ENCODE measurements at regions of chr6 and their contacts with region 1.

Region 1: GRCh38 chr6:125974214-125974866 is 12.0 kb upstream of the TRMT11 start:
- DNase-seq: peak; percentile 46
- ATAC-seq: peak; percentile 77
- H3K4me3 ChIP-seq: no peak overlapping the region
- H3K27ac ChIP-seq: no peak overlapping the region
- H3K4me1 ChIP-seq: no peaks in the 10 kb centered on the region
- H3K27me3 ChIP-seq: no peaks in the 10 kb centered on the region
- CTCF ChIP-seq: peak; percentile 35 to 67 (median 52); a peak in 5 of 6 replicates
- POLR2A ChIP-seq: no peak
- RAD21 ChIP-seq: peak; percentile 71

Region 2: GRCh38 chr6:125294925-125295324 is 679.4 kb before region 1 on chr6:
- CTCF ChIA-PET with region 1: no interaction called
- POLR2A ChIA-PET with region 1: no interaction called
- RAD21 ChIA-PET with region 1: no interaction called
- intact Hi-C with region 1: no loop called
- DNase-seq: no peak
- ATAC-seq: no peak
- H3K4me3 ChIP-seq: no peak overlapping the region
- H3K27ac ChIP-seq: no peak overlapping the region
- H3K4me1 ChIP-seq: peaks cover 0 to under 1% of the 10 kb centered on the region in 2 experiments; a peak in 1 of 4 replicates
- H3K27me3 ChIP-seq: no peaks in the 10 kb centered on the region
- CTCF ChIP-seq: no peak
- POLR2A ChIP-seq: no peak
- RAD21 ChIP-seq: no peak

Region 3: DNA sequence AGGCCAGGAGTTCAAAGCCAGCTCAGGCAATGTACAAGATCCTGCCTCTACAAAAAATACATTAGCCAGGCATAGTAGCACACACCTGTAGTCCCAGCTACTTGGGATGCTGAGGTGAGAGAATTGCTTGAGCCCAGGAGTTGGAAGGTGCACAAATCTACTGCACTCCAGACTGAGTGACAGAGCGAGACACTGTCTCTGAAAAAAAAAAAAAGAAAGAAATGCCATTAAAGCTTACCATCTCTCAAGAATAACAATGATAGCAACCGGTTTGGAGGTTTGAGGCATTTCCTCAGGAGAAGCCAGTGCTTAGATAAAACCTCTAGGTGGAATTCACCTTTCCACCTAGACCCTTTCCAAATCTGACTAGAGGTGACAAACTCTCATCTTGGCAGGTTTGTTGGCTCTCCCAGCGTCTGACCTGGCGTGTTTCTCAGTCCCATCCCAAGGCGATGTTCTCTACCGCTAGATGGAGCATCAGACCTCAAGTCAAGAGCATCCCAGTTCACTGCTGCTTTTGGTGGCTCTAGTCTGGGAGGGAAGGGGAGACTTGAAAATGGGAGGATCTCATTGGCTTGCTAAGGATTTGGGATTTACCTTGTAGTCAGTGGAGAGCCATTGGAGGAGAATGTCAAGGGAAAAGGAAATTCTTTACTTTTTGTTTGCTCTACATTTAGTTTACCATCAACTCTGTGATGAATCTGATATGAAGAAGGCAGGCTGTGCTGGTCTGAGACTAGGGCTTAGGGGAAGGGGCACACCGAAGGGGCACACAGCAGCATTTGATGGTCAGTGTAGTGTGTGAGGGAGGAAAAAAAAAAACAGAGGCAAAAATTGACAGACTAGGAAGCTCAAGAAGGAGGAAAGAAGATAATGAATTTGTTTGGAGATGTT is 115.7 kb before region 1 on chr6:
- CTCF ChIA-PET with region 1: interaction called, 4 read pairs
- POLR2A ChIA-PET with region 1: no interaction called
- RAD21 ChIA-PET with region 1: no interaction called
- intact Hi-C with region 1: loop called (anchors 2 kb)
- DNase-seq: peak; percentile 42
- ATAC-seq: peak; percentile 96
- H3K4me3 ChIP-seq: no peak overlapping the region
- H3K27ac ChIP-seq: no peak overlapping the region
- H3K4me1 ChIP-seq: no peaks in the 10 kb centered on the region
- H3K27me3 ChIP-seq: no peaks in the 10 kb centered on the region
- CTCF ChIP-seq: peak; percentile 49 to 68 (median 63); a peak in 5 of 6 replicates
- POLR2A ChIP-seq: no peak
- RAD21 ChIP-seq: peak; percentile 70

Measured in HCT116 (cell line).